MCF 10A (cell line): ENCODE measurements at regions of chr10 and their contacts with region 1.

Region 1: DNA sequence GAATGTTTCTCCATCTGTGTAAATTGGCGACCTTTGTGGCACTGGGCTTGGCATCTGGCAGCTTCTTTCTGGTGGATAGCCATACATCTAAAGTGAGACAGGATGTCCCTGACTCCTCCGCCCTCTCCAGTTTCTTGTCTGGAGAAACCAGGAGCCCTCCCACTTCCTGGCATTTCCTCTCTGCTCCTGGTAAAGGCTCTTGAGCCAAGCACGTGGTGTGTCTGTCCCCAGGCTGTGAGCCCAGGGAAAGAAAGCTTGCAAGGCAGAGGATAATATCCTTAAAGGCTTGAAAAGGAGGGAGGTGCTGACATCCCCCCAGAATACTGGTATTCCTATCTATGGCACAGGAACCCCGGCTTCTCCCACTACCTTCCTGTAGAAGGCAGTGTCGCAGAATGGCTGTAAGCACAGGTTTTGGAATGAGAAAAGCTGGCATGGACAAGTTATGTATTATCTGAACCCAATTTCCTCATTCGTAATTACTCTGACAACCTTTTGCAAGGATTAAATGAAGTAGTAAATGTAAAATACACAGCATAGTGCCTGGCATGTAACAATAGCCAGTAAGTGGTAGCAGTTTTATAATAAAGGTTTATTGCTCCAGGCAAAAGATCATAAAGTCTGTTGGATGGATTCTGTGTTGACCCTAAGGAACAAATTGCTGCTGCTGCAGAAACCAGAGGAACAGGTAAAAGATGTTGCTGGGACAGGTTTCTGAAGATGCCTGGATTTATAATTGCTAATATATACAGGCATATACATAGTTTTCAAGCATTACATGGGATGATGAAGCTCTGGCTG is 11.8 kb upstream of the ACSL5 start:
- DNase-seq: peak; percentile 93
- H3K4me3 Mint-ChIP-seq: peak overlapping the region; percentile 38
- H3K27ac Mint-ChIP-seq: peak overlapping the region; percentile 90
- H3K4me1 Mint-ChIP-seq: peaks cover 37% of the 10 kb centered on the region
- H3K27me3 Mint-ChIP-seq: no peaks in the 10 kb centered on the region
- CTCF ChIP-seq: no peak

Region 2: GRCh38 chr10:112349521-112350085 is 12.5 kb before region 1 on chr10:
- CTCF ChIA-PET with region 1: interaction called, 12 read pairs
- POLR2A ChIA-PET with region 1: interaction called, 41 read pairs
- intact Hi-C with region 1: no loop called
- DNase-seq: no peak
- H3K4me3 Mint-ChIP-seq: no peak overlapping the region
- H3K27ac Mint-ChIP-seq: no peak overlapping the region
- H3K4me1 Mint-ChIP-seq: peaks cover 5% of the 10 kb centered on the region
- H3K27me3 Mint-ChIP-seq: no peaks in the 10 kb centered on the region
- CTCF ChIP-seq: no peak

Region 3: DNA sequence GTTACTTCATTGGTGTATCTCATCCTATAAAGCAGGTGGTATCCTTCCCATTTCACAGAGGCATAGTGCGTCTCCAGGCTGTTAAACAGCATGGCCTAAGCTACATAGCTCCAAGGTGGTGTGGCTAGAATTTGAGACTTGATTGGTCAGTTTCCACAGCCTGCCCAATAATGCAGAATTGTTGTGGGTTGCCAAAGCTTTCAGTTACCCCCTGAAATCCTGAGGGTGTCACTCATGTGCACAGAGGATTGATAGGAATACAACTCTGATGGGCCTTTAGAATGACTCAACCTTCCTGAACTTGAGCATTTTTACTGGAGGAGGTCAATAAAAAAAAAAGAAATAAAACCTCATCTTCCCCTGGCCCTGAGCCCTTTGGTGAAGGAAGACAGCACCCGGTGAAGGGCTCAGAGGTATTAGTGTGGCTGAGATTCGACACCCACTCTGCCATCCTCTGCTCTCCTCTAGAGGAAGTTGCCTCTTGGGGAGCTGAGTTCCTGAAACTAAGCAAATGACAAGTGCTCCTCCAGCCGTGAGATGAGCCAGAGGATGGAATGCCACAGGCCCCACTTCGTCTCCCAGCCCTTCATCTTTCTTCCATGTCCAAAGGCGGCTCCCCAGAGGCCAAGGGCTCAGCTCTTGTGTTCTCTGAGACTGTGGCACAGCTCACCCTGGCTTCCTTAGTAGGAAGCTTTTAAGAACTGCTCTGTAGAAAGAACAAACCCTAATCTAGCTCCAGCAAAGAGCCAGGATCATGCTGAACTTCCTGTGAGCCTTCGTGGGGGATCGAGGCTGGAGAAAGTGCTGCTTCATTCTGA is 12.8 kb after region 1 on chr10:
- CTCF ChIA-PET with region 1: interaction called, 7 read pairs
- POLR2A ChIA-PET with region 1: interaction called, 17 read pairs
- intact Hi-C with region 1: no loop called
- DNase-seq: no peak
- H3K4me3 Mint-ChIP-seq: no peak overlapping the region
- H3K27ac Mint-ChIP-seq: peak overlapping the region; percentile 63
- H3K4me1 Mint-ChIP-seq: peaks cover 21% of the 10 kb centered on the region
- H3K27me3 Mint-ChIP-seq: no peaks in the 10 kb centered on the region
- CTCF ChIP-seq: no peak

Region 4: GRCh38 chr10:112446855-112447711 is 84.9 kb after region 1 on chr10 and contains the starts of genes VTI1A and ZDHHC6:
- CTCF ChIA-PET with region 1: interaction called, 4 read pairs
- POLR2A ChIA-PET with region 1: interaction called, 21 read pairs
- intact Hi-C with region 1: no loop called
- DNase-seq: peak; percentile 85
- H3K4me3 Mint-ChIP-seq: peak within 1 kb of the TSS; percentile 95
- H3K27ac Mint-ChIP-seq: peak within 1 kb of the TSS; percentile 88
- H3K4me1 Mint-ChIP-seq: peaks cover 16% of the 10 kb centered on the region
- H3K27me3 Mint-ChIP-seq: no peaks in the 10 kb centered on the region
- CTCF ChIP-seq: no peak
- total RNA-seq, gene VTI1A: 44.4 and 58.1 TPM in 2 replicates
- total RNA-seq, gene ZDHHC6: 25.9 and 26.3 TPM in 2 replicates